MCF 10A (cell line): ENCODE measurements at regions of chr13 and their contacts with region 1.

Region 1: DNA sequence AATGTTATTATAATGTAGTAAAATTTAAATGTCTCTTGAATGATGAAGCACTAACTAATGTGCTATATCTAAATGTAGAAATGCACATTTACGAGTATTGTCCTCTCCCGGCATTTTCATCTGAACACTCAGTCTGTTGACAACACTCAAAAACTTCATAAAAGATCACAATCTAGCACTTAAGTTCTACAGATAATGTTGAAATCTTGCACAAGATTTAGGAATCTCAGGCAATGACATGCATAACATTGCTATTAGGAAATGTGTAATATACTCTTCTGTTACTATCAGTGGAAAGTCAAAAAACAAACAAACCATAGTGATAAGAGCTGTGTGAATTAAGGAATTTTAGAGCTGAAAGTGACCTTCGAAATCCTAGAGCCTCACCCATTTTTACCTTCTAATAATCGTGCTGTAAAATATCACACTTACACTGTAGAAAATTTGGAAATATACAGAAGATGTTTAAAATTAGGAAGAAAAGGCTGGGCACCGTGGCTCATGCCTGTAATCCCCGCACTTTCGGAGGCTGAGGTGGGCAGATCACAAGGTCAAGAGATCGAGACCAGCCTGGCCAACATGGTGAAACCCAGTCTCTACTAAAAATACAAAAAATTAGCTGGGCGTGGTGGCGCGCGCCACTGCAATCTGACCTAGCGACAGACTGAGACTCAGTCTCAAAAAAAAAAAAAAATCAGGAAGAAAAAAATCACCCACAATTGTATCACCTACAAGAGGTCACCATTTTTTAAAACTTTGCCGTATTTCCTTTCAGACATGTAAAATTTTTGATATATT is 37.7 kb upstream of the XPO4 start:
- DNase-seq: no peak
- H3K4me3 Mint-ChIP-seq: no peak overlapping the region
- H3K27ac Mint-ChIP-seq: peak overlapping the region; percentile 63
- H3K4me1 Mint-ChIP-seq: peaks cover 12% of the 10 kb centered on the region
- H3K27me3 Mint-ChIP-seq: no peaks in the 10 kb centered on the region
- CTCF ChIP-seq: no peak

Region 2: DNA sequence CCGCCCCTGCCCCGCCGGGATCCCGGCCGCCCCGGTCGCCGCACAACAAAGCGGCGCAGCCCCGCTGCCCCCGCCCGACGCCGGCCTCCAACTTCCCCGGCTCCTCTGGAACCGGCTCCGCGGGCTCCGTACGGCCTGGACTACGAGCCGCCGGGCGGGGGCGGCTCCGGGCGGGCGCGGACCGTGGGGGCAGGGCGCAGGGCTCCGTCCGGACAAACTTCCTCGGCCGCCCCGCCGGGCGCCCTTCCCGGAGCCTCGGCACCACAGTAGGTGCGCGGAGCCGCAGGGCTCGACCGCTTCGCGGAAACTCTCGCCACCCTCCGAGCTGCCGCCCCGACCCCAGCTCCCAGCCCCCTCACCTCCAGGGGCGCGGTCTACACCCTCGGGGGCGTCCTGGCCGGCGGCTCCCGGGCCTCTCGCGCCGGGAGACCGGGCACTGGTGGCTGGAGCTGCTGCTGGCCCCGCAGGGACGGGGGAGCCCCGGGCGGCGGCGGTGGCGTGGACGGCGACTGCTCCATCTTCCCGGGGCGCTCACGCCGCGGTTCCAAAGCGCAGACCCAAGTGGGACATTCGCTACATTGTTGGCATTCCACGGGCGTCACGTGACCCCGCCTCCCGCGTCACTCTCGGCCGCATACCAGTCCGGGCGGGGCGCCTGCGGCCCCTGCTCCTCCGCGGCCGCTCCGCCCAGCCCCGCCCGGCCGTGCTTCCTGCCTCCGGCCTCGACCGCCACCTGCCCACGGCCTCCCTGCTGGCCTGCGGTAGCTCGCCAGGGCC is 120.9 kb after region 1 on chr13 and contains the start of gene LATS2:
- CTCF ChIA-PET with region 1: interaction called, 6 read pairs
- POLR2A ChIA-PET with region 1: interaction called, 4 read pairs
- intact Hi-C with region 1: loop called (anchors 1 kb)
- DNase-seq: peak; percentile 90
- H3K4me3 Mint-ChIP-seq: peak within 1 kb of the TSS; percentile 73
- H3K27ac Mint-ChIP-seq: peak within 1 kb of the TSS; percentile 86
- H3K4me1 Mint-ChIP-seq: peaks cover 18% of the 10 kb centered on the region
- H3K27me3 Mint-ChIP-seq: no peaks in the 10 kb centered on the region
- CTCF ChIP-seq: no peak
- total RNA-seq, gene LATS2: 28.7 and 32.3 TPM in 2 replicates

Region 3: GRCh38 chr13:21106089-21106488 is 165.8 kb after region 1 on chr13:
- CTCF ChIA-PET with region 1: interaction called, 5 read pairs
- POLR2A ChIA-PET with region 1: interaction called, 3 read pairs
- intact Hi-C with region 1: loop called (anchors 1 kb)
- DNase-seq: no peak
- H3K4me3 Mint-ChIP-seq: no peak overlapping the region
- H3K27ac Mint-ChIP-seq: peak overlapping the region; percentile 31
- H3K4me1 Mint-ChIP-seq: peaks cover 6% of the 10 kb centered on the region
- H3K27me3 Mint-ChIP-seq: no peaks in the 10 kb centered on the region
- CTCF ChIP-seq: no peak

Region 4: DNA sequence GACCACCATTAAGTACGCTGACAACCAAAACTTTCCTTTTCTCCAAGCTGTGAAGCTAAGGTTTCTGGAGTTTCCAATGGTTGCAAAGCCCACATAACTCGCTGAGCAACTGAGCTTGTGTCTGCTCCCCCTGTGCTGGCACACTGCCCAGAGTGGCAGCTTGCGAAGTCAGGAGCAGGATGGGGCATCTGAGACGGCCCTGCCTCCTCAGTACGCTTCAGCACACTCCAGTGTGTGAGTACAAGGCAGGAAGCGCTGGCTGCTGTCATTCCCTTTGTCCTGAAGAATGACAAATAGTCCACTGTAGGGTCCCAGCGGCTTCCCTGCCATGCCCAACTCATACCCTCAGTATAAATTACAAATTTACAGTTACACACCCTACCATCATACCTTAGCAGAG is 184.6 kb after region 1 on chr13:
- CTCF ChIA-PET with region 1: interaction called, 14 read pairs
- POLR2A ChIA-PET with region 1: no interaction called
- intact Hi-C with region 1: no loop called
- DNase-seq: peak; percentile 25
- H3K4me3 Mint-ChIP-seq: no peak overlapping the region
- H3K27ac Mint-ChIP-seq: no peak overlapping the region
- H3K4me1 Mint-ChIP-seq: no peaks in the 10 kb centered on the region
- H3K27me3 Mint-ChIP-seq: no peaks in the 10 kb centered on the region
- CTCF ChIP-seq: no peak

Region 5: DNA sequence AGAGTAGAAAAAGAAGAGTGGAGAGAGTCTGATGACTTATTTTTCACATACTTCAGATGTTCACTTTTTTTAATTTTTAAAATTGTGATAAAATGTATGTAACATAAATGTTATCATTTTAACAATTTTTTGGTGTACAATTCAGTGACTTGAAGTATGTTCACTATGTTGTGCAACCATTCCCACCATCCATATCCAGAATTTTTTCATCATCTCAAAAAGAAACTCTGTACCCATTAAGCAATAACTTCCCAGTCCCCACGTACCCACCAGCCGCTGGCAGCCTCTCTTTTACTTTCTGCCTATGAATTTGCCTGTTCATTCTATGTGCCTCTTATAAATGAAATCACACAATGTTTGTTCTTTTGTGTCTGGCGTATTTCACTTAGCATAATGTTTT is 192.8 kb after region 1 on chr13:
- CTCF ChIA-PET with region 1: interaction called, 27 read pairs
- POLR2A ChIA-PET with region 1: interaction called, 5 read pairs
- intact Hi-C with region 1: loop called (anchors 1 kb)
- DNase-seq: no peak
- H3K4me3 Mint-ChIP-seq: no peak overlapping the region
- H3K27ac Mint-ChIP-seq: no peak overlapping the region
- H3K4me1 Mint-ChIP-seq: peaks cover 8% of the 10 kb centered on the region
- H3K27me3 Mint-ChIP-seq: no peaks in the 10 kb centered on the region
- CTCF ChIP-seq: no peak

Region 6: DNA sequence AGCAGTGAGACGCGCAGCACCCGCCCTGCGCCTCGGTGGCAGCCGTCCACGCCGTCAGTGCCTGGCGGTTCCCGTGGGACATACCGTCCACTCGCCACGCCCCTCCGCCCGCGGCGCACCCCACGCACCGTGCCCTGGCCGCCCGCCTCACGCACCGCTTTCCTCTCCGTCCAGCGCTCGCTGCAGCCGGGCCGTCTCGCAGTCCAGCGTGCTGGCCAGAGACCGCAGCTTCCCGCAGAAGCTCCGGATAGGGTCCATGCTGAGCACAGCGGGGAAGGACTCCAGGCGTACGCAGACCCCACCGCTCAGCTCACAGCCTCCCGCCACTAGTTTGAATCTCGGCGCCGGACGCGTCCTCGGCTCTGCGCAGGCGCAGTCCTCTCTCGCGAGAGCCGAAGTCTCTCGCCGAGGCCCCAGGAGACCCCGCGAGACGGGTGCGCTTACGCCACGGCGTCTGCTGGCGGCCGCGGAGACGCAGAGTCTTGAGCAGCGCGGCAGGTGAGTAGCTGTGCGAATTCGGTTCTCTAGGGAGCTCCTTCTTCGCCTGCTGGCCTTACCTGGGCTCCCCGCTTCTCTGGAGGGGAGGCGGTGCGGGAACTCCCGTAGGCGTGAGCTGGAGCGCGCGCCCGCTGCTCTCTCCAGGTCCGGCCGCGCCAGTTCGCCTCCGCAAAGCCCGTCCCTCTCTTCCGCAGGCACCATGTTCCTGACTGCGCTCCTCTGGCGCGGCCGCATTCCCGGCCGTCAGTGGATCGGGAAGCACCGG is 236.1 kb after region 1 on chr13 and contains the starts of genes MRPL57 and SKA3:
- CTCF ChIA-PET with region 1: interaction called, 15 read pairs
- POLR2A ChIA-PET with region 1: interaction called, 8 read pairs
- intact Hi-C with region 1: loop called (anchors 1 kb)
- DNase-seq: peak; percentile 92
- H3K4me3 Mint-ChIP-seq: peak within 1 kb of the TSS; percentile 99
- H3K27ac Mint-ChIP-seq: peak within 1 kb of the TSS; percentile 90
- H3K4me1 Mint-ChIP-seq: no peaks in the 10 kb centered on the region
- H3K27me3 Mint-ChIP-seq: no peaks in the 10 kb centered on the region
- CTCF ChIP-seq: no peak
- total RNA-seq, gene MRPL57: 16.8 and 20.8 TPM in 2 replicates
- total RNA-seq, gene SKA3: 5.9 and 16.4 TPM in 2 replicates